Activated T-helper 1 cell treated with anti-CD3 and anti-CD28 coated beads, Interleukin-12 subunit alpha, Interleukin-12 subunit beta, Interleukin-2, Interleukin-4 antibody, amounts not matched to agents 30 ng/mL and 10 ng/mL and 1 ng/mL, durations not matched to agents 14 hours and 24 hours and 36 hours (primary cell): ENCODE measurements at regions of chr9 and their contacts with region 1.

Region 1: DNA sequence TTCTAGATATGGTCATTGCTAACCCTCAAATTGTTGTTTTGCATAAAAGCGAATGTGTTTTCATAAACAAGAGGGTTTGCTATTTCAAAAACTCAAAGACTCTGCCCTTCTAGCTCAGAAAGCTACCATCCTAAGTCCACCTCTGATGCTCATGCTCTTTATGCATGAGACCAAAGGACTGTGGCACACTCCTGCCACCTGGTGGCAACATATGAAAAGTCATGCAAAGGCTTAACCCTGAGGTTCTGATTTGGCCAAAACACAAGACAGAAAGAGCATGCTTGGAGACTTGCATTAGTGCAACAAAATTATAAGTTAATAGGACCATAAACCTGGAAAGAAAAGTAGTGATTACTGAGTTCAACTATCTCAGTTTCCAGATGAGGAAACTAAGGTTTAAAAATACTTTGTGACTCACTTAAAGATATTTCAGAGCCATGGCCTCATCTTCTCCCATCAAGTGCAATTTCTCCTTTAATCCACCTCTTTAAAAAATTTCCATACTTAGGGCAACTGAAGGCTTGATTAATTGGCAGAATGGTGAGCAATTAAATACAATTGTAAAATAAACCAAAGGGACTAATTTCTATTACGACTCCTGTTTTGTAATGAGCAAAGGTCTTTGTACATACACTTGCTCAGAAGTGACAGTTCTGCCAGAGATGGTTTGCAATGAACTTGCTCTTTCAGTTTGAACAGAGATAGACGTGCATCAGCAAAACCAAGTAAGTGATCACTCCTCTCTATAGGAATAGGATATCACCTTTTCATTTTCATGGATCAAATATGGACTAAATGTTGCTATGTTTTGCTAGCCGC is 110.7 kb upstream of the RAD23B start:
- DNase-seq: peak; percentile 41
- H3K4me3 Mint-ChIP-seq: no peak overlapping the region
- H3K27ac Mint-ChIP-seq: peak overlapping the region; percentile 31
- H3K4me1 Mint-ChIP-seq: peaks cover 29% of the 10 kb centered on the region
- H3K27me3 Mint-ChIP-seq: no peaks in the 10 kb centered on the region

Region 2: DNA sequence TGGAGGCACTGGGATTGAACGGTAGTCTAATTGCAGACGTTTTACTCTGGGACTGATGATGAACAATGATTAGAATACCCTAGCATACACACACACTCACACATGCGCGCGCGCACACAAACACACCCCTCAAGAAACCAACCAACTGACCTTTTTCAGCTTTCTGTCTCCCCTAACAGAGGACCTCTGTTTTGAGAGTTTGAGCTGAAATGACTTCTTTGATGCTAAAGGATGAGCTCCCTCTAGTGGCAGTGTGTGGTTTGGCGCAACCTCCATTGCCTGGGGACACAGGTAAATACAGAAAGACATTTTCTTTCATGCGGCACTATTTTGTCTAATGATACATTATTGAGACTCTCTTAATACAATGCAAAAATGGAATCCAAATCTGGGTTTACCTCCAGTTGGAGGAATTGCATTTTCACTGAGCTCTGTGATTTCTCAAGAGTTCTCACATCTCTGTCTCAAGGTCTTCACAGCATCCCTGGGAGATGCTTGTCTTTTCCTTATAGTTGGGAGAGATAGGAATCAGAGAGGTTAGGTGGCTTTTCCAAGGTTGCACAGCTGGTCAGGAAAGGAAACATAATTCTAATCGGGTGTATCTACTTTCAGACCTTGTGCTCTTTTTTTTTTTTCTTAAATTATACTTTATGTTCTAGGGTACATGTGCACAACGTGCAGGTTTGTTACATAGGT is 1290.6 kb before region 1 on chr9:
- intact Hi-C with region 1: loop called (anchors 5 kb)
- DNase-seq: peak; percentile 52
- H3K4me3 Mint-ChIP-seq: no peak overlapping the region
- H3K27ac Mint-ChIP-seq: no peak overlapping the region
- H3K4me1 Mint-ChIP-seq: peaks cover 30% of the 10 kb centered on the region
- H3K27me3 Mint-ChIP-seq: peaks cover 14% of the 10 kb centered on the region

Region 3: DNA sequence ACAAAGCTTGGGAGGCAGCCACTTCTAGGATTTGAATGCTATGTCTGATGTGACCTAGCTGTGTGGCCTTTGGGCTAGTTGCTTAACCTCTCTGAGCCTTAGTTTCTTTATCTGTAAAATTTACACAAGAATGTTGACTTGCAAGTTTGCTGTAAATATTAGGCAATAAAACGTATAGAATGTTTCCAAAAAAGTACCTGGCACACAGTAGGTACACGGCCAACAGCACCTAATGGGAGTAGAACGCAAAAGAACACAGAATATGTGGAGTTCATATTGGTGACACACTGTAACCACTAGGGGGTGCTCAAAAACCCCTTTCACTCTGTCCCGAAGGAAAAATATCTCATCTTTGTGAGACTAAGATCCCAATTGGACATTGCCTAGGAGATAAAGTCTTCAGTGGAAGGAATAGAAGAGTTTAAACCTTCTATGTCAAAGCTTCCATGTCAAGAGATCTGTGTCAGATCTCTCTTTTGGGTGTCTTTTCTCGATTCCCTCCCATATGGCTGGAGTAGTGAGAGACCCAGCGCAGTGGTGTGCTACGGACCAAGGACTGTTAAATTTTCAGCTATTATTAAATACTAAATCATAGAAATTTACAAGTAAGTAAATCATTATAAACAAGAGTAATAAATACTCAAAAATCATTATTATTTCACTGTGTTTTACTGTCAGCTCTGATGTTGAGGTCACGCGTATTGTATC is 34.7 kb before region 1 on chr9:
- intact Hi-C with region 1: loop called (anchors 1 kb)
- DNase-seq: no peak
- H3K4me3 Mint-ChIP-seq: no peak overlapping the region
- H3K27ac Mint-ChIP-seq: no peak overlapping the region
- H3K4me1 Mint-ChIP-seq: no peaks in the 10 kb centered on the region
- H3K27me3 Mint-ChIP-seq: peaks cover 2% of the 10 kb centered on the region

Region 4: GRCh38 chr9:107190061-107190935 is 17.9 kb after region 1 on chr9:
- intact Hi-C with region 1: no loop called
- DNase-seq: no peak
- H3K4me3 Mint-ChIP-seq: no peak overlapping the region
- H3K27ac Mint-ChIP-seq: no peak overlapping the region
- H3K4me1 Mint-ChIP-seq: no peaks in the 10 kb centered on the region
- H3K27me3 Mint-ChIP-seq: no peaks in the 10 kb centered on the region

Region 5: GRCh38 chr9:107243751-107244150 is 71.4 kb after region 1 on chr9:
- intact Hi-C with region 1: loop called (anchors 2 kb)
- DNase-seq: peak; percentile 17
- H3K4me3 Mint-ChIP-seq: no peak overlapping the region
- H3K27ac Mint-ChIP-seq: peak overlapping the region; percentile 82
- H3K4me1 Mint-ChIP-seq: peaks cover 15% of the 10 kb centered on the region
- H3K27me3 Mint-ChIP-seq: peaks cover 6% of the 10 kb centered on the region